ENCODE measurements at regions of chr19 and their contacts with region 1.

Region 1: DNA sequence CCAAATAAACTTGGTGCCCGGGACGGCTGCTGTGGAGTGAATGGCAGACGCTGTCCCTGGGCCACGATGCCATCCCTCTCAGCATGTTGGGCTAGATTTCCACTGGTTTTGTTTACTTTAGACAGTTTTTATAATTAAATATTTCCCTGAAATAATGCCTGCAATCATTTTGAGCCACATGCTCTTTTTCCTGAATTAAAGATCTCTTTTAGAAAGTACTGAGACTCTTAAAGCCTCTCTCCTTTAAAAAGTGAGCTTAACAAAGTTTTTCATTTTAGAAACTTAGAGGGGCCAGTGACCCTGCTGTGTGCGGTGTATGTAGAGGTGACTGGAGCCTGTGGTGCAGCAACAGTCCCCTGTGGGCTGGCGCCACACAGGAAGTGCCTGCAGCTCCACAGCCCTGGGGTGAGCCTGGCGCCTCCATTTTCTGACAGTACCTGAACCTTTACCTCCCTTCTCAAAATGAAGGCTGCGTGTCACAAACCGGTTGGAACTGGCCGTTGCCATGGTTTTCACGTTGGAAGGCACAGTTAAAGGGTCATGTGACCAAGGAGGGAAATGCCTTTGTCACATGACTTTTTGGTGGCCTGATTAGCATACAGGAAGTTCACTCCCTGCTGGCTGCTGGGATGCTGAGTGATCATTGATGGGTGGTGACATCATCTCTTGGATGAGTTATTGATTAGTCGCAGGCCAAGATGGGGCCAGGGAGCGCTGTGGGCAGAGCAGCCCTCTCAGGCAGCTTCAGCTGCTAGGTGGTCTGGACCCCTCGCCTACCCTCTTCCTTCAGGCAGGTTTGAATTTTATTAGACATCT is 26.3 kb downstream of the TSSK6 start:
- DNase-seq: peak; percentile 74
- H3K4me3 ChIP-seq: no peak overlapping the region
- H3K27me3 ChIP-seq: no peaks in the 10 kb centered on the region
- CTCF ChIP-seq: no peak

Region 2: DNA sequence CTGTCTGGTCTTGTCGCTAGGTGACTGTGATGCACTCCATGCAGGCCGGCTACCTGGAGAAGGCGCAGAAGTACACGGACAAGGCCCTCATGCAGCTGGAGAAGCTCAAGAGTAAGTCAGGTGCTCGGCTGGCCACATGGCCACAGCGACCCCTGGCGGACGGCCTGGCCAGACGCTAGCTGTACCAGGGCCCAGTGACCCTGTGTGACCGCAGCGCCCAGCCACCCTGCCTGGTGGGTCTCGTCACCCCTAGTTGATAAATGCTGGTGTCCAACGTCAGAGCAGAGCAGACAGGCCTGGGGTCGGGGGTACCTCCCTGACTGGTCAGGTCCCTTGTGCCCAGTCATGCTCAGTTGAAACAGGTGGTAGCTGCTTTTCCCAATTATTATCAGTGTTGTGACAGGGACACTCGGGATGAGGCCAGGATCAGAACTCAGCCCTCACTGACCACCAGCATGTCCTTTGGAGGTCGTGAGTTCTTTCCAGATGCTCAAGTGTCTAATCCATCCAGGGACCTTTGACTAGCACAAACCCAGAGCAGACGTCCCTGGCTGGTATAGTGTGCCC is 146.2 kb before region 1 on chr19:
- CTCF ChIA-PET with region 1: interaction called, 11 read pairs
- POLR2A ChIA-PET with region 1: no interaction called
- DNase-seq: no peak
- H3K4me3 ChIP-seq: no peak overlapping the region
- H3K27me3 ChIP-seq: no peaks in the 10 kb centered on the region
- CTCF ChIP-seq: peak; percentile 94

Region 3: DNA sequence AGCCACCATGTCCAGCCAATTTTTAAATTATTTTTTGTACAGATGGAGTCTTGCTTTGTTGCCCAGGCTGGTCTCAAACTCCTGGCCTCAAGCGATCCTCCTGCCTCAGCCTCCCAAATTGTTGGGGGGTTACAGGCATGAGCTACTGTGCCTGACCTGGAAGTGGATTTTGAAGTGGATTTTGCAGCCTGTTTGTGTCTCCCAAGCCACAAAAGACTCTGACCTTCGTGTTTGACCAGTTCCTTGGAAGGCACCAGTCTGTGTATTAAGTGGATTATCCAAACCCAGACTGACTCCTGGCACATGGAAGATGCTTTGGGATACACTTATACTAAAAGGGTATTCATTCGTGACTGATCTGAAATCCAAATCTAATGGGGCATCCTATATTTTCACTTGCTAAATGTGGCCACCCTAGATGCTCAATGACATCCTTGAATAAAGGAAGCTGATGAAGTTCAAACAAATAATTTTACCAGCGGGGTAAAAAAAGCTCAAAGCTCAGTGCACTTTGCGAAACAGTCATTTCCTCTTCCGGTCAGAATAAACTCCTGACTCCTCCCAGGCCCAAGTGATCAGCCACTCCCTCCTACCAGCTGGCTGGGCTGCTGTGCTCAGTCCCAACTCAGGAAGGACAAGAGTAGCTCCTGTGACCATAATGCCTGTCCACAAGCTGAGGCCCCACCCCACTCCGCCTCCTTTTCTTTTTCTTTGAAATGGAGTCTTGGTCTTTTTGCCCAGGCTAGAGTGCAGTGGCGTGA is 116.2 kb before region 1 on chr19:
- CTCF ChIA-PET with region 1: interaction called, 189 read pairs
- POLR2A ChIA-PET with region 1: no interaction called
- DNase-seq: no peak
- H3K4me3 ChIP-seq: no peak overlapping the region
- H3K27me3 ChIP-seq: no peaks in the 10 kb centered on the region
- CTCF ChIP-seq: no peak

Region 4: GRCh38 chr19:19388568-19389470 is 100.3 kb before region 1 on chr19:
- CTCF ChIA-PET with region 1: interaction called, 10 read pairs
- POLR2A ChIA-PET with region 1: interaction called, 7 read pairs
- DNase-seq: no peak
- H3K4me3 ChIP-seq: no peak overlapping the region
- H3K27me3 ChIP-seq: no peaks in the 10 kb centered on the region
- CTCF ChIP-seq: no peak

Region 5: GRCh38 chr19:19510430-19510829 is 21.3 kb after region 1 on chr19:
- CTCF ChIA-PET with region 1: interaction called, 29 read pairs
- POLR2A ChIA-PET with region 1: no interaction called
- DNase-seq: no peak
- H3K4me3 ChIP-seq: no peak overlapping the region
- H3K27me3 ChIP-seq: no peaks in the 10 kb centered on the region
- CTCF ChIP-seq: no peak

Region 6: DNA sequence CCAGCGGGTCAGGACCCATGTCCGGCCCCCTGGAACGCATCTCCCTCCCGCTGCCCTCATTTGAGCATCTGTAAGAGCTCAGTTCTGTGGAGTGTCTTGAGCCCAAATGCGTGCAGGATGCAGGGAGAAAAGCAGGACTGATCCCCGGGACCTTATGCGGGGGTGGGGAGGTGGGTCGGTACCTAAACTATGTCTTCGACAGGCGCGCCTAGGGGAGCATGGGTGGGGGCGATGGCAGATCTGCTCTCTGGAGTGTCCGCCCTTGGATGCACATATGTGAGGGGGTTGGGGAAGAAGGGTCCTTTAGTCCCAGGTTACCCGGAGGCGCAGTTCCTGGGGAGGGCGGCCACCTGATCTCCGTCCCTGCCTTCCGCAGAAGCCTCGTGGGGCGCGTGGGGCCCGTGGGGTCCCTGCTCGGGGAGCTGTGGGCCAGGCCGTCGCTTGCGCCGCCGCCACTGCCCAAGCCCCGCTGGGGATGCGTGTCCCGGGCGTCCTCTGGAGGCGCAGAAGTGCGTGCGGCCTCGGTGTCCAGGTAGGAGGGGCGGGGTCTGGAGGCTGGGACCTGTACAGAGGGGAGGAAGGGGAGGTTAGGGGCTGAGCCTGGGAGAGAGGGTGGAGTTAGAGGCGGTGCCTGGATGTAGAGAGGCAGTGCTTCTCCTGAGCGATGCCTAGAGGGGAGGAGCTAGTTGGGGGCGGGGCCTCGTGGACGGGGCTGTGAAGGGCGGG is 51.8 kb after region 1 on chr19:
- CTCF ChIA-PET with region 1: no interaction called
- POLR2A ChIA-PET with region 1: no interaction called
- DNase-seq: no peak
- H3K4me3 ChIP-seq: peak overlapping the region; percentile 19
- H3K27me3 ChIP-seq: peaks cover 3% of the 10 kb centered on the region
- CTCF ChIP-seq: no peak

Region 7: DNA sequence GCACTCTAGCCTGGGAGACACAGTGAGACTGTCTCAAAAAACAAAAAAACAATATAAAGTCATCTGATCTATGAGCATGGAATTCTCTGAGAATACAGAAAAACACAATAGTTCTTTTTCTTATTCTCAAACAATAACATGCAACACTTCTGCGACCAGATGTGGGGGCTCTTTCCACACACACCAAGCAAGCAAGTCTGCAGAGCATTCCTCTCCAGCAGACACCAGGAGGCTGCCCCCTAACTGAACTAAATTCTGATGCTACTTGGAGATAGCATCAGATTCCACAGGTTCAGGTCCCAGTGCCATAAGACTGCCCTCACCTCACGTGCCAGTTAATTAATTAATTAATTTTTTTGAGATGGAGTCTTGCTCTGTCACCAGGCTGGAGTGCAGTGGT is 207.3 kb after region 1 on chr19:
- CTCF ChIA-PET with region 1: no interaction called
- POLR2A ChIA-PET with region 1: no interaction called
- DNase-seq: no peak
- H3K4me3 ChIP-seq: no peak overlapping the region
- H3K27me3 ChIP-seq: no peaks in the 10 kb centered on the region
- CTCF ChIP-seq: no peak